ENCODE measurements at regions of chr2 and their contacts with region 1.

Region 1: GRCh38 chr2:178414266-178415247 is 36.4 kb downstream of the PRKRA start:
- DNase-seq: peak; percentile 94
- H3K4me3 Mint-ChIP-seq: peak overlapping the region; percentile 97
- H3K27ac Mint-ChIP-seq: peak overlapping the region; percentile 99
- H3K4me1 Mint-ChIP-seq: peaks cover 35% of the 10 kb centered on the region
- H3K27me3 Mint-ChIP-seq: peaks cover 3% of the 10 kb centered on the region

Region 2: DNA sequence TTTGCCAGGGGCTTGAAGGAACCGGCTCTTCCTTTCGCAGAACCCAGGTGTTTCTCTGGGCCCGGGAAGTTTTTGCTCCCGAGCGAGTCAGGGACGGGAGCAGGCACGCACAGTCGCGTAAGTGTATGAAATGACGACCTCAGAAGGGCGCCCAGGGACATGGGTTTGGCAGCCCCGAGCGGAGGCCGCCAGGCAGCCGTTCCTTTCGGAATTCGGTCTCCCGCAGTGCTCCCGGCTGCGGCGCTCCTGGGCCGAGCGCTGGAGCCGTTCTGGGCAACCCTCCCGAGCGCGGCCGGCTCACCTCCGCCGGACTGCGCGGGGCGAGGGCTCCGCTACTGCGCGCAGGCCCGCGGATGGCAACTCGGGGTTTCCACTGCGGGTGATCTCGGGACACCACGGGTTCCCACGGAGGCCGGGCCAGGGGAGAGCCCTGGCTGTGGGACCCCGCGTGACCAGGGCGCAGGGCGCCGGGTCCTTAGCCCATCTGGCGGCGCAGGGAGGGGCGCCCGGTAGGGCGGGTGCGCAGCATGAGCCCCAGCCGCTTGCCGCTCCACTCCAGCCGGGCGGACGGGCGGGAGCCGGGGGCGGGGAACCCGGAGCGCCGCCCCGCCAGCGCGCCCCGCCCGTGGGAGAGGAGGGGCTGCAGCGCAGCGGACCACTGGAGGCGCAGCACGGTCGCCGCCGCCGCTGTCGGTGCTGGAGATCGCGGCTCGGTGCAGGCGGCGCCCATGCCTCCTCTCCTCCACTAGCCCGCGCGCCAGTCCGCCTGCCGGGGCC is 220.5 kb before region 1 on chr2 and contains the start of gene OSBPL6:
- intact Hi-C with region 1: loop called (anchors 2 kb)
- DNase-seq: peak; percentile 94
- H3K4me3 Mint-ChIP-seq: peak within 1 kb of the TSS; percentile 80
- H3K27ac Mint-ChIP-seq: no peak within 1 kb of the TSS
- H3K4me1 Mint-ChIP-seq: peaks cover 8% of the 10 kb centered on the region
- H3K27me3 Mint-ChIP-seq: peaks cover 55% of the 10 kb centered on the region
- total RNA-seq, gene OSBPL6: 1.1 and 1.5 TPM in 2 replicates

Region 3: GRCh38 chr2:178397002-178397605 is 17.5 kb before region 1 on chr2:
- intact Hi-C with region 1: loop called (anchors 1 kb)
- DNase-seq: peak; percentile 67
- H3K4me3 Mint-ChIP-seq: no peak overlapping the region
- H3K27ac Mint-ChIP-seq: no peak overlapping the region
- H3K4me1 Mint-ChIP-seq: peaks cover 5% of the 10 kb centered on the region
- H3K27me3 Mint-ChIP-seq: peaks cover 17% of the 10 kb centered on the region

Region 4: GRCh38 chr2:178450774-178451525 is 36.4 kb after region 1 on chr2 and contains the starts of genes PJVK and PRKRA:
- intact Hi-C with region 1: loop called (anchors 1 kb)
- DNase-seq: peak; percentile 99
- H3K4me3 Mint-ChIP-seq: peak within 1 kb of the TSS; percentile 94
- H3K27ac Mint-ChIP-seq: peak within 1 kb of the TSS; percentile 98
- H3K4me1 Mint-ChIP-seq: peaks cover 25% of the 10 kb centered on the region
- H3K27me3 Mint-ChIP-seq: peaks cover 7% of the 10 kb centered on the region
- total RNA-seq, gene PJVK: 2.0 and 2.3 TPM in 2 replicates
- total RNA-seq, gene PRKRA: 52.4 and 61.2 TPM in 2 replicates

Region 5: GRCh38 chr2:178469219-178469849 is 54.8 kb after region 1 on chr2:
- intact Hi-C with region 1: no loop called
- DNase-seq: no peak
- H3K4me3 Mint-ChIP-seq: no peak overlapping the region
- H3K27ac Mint-ChIP-seq: no peak overlapping the region
- H3K4me1 Mint-ChIP-seq: peaks cover 2% of the 10 kb centered on the region
- H3K27me3 Mint-ChIP-seq: no peaks in the 10 kb centered on the region

Region 6: DNA sequence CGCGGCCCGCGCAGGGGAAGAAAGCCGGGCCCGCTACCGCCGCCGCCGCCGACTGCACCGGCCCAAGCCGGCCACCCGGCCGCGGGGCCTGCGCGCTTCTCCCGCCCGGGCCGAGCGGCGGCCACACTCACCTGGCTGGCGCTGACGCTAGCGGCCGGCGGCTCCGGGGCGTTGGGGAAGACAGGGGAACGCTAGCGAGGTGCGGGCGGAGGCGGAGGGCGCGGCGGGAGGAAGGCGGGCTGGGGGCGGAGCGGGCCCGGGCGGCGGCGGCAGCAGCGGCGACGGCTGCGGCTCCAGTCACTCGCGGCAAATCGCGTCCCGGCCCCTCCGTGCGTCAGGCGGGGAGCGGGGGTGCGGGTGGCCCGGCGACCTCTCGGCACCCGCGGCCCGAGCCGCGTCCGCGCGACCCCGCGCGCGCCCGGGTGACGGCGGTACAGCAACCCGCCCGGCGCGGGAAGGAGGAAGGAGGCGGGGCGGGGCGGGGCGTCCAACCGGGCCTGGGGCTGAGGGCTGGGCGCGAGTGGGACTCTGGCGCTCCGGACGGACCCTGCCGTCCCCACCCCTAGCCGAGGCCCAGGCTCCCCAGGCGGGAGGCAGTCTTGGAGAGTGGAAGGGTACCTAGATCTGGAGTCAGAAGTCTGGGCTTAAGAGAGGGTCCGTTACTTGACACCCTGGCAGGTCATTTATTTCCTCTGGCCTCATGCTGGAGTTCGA is 850.0 kb after region 1 on chr2 and contains the start of gene SESTD1:
- intact Hi-C with region 1: loop called (anchors 10 kb)
- DNase-seq: peak; percentile 91
- H3K4me3 Mint-ChIP-seq: peak within 1 kb of the TSS; percentile 91
- H3K27ac Mint-ChIP-seq: peak within 1 kb of the TSS; percentile 88
- H3K4me1 Mint-ChIP-seq: peaks cover 27% of the 10 kb centered on the region
- H3K27me3 Mint-ChIP-seq: peaks cover 49% of the 10 kb centered on the region
- total RNA-seq, gene SESTD1: 12.3 and 13.4 TPM in 2 replicates